ENCODE measurements at regions of chr6 and their contacts with region 1.

Region 1: DNA sequence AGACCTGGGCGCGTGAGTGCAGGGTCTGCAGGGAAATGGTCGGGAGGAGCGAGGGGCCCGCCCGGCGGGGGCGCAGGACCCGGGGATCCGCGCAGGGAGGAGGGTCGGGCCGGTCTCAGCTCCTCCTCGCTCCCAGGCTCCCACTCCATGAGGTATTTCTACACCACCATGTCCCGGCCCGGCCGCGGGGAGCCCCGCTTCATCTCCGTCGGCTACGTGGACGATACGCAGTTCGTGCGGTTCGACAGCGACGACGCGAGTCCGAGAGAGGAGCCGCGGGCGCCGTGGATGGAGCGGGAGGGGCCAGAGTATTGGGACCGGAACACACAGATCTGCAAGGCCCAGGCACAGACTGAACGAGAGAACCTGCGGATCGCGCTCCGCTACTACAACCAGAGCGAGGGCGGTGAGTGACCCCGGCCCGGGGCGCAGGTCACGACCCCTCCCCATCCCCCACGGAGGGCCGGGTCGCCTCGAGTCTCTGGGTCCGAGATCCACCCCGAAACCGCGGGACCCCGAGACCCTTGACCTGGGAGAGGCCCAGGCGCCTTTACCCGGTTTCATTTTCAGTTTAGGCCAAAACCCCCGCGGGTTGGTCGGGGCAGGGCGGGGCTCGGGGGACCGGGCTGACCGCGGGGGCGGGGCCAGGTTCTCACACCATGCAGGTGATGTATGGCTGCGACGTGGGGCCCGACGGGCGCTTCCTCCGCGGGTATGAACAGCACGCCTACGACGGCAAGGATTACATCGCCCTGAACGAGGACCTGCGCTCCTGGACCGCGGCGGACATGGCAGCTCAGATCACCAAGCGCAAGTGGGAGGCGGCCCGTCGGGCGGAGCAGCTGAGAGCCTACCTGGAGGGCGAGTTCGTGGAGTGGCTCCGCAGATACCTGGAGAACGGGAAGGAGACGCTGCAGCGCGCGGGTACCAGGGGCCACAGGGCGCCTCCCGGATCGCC is 54.2 kb upstream of the HLA-A start:
- DNase-seq: no peak
- ATAC-seq: peak; percentile 44; the same call in 2 of the 3 replicates
- H3K4me3 ChIP-seq: no peak overlapping the region
- H3K27ac ChIP-seq: no peak overlapping the region
- H3K4me1 ChIP-seq: peaks cover 0 to 15% of the 10 kb centered on the region in 2 experiments; a peak in 1 of 5 replicates
- H3K27me3 ChIP-seq: peaks cover 9 to 21% of the 10 kb centered on the region in 2 experiments; a peak in 3 of 5 replicates
- CTCF ChIP-seq: no peak
- EP300 ChIP-seq: no peak
- POLR2A ChIP-seq: no peak
- RAD21 ChIP-seq: no peak

Region 2: GRCh38 chr6:29676981-29677601 is 211.0 kb before region 1 on chr6:
- CTCF ChIA-PET with region 1: no interaction called
- POLR2A ChIA-PET with region 1: no interaction called
- in situ Hi-C with region 1: no loop called
- intact Hi-C with region 1: no loop called
- DNase-seq: no peak
- ATAC-seq: no peak
- H3K4me3 ChIP-seq: no peak overlapping the region
- H3K27ac ChIP-seq: no peak overlapping the region
- H3K4me1 ChIP-seq: peaks cover 0 to 9% of the 10 kb centered on the region in 2 experiments; a peak in 2 of 5 replicates
- H3K27me3 ChIP-seq: peaks cover 27 to 48% of the 10 kb centered on the region in 2 experiments; a peak in 4 of 5 replicates
- CTCF ChIP-seq: no peak
- EP300 ChIP-seq: no peak
- POLR2A ChIP-seq: no peak
- RAD21 ChIP-seq: no peak

Region 3: DNA sequence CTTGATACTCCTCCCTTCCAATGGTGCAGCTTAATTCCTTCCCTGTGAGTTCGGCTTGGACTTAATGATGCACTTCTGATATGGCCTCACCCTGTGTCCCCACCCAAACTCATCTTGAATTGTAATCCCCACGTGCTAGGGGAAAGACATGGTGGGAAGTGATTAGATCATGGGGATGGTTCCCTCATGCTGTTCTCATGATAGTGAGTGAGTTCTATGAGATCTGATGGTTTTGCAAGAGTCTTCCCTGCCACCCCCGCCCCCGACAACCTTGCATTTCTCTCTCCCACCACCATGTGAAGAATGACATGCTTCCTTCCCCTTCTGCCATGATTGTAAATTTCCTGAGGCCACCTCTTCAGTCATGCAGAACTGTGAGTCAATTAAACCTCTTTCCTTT is 110.8 kb before region 1 on chr6:
- CTCF ChIA-PET with region 1: no interaction called
- POLR2A ChIA-PET with region 1: no interaction called
- in situ Hi-C with region 1: no loop called
- intact Hi-C with region 1: no loop called
- DNase-seq: no peak
- ATAC-seq: no peak
- H3K4me3 ChIP-seq: no peak overlapping the region
- H3K27ac ChIP-seq: no peak overlapping the region
- H3K4me1 ChIP-seq: no peaks in the 10 kb centered on the region
- H3K27me3 ChIP-seq: peaks cover 4 to 8% of the 10 kb centered on the region in 2 experiments; a peak in 3 of 5 replicates
- CTCF ChIP-seq: no peak
- EP300 ChIP-seq: no peak
- POLR2A ChIP-seq: no peak
- RAD21 ChIP-seq: no peak

Region 4: DNA sequence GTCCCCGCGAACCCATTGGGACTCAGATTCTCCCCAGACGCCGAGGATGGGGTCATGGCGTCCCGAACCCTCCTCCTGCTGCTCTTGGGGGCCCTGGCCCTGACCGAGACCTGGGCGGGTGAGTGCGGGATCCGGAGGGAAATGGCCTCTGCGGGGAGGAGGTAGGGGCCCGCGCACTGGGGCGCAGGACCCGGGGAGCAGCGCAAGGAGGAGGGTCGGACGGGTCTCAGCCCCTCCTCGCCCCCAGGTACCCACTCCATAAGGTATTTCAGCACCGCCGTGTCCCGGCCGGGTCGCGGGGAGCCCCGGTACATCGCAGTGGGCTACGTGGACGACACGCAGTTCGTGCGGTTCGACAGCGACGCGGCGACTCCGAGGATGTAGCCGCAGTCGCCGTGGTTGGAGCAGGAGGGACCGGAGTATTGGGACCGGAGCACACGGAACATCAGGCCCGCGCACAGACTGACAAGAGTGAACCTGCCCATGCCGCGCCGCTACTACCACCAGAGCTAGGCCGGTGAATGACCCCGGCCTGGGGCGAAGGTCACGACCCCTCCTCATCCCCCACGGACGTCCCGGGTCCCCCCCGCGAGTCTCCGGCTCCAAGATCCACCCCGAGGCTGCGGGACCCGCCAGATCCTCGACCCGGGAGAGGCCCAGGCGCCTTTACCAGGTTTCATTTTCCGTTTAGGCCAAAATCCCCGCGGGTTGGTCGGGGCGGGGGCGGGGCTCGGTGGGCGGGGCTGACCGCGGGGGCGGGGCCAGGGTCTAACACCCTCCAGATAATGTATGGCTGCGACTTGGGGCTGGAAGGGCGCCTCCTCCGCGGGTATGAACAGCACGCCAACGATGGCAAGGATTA is 38.5 kb after region 1 on chr6:
- CTCF ChIA-PET with region 1: no interaction called
- POLR2A ChIA-PET with region 1: no interaction called
- in situ Hi-C with region 1: loop called (anchors 5 kb)
- intact Hi-C with region 1: no loop called
- DNase-seq: peak in 1 of 4 experiments; percentile 20
- ATAC-seq: peak; percentile 71
- H3K4me3 ChIP-seq: no peak overlapping the region
- H3K27ac ChIP-seq: no peak overlapping the region
- H3K4me1 ChIP-seq: peaks cover 0 to 10% of the 10 kb centered on the region in 2 experiments; a peak in 2 of 5 replicates
- H3K27me3 ChIP-seq: peaks cover 0 to 12% of the 10 kb centered on the region in 2 experiments; a peak in 3 of 5 replicates
- CTCF ChIP-seq: no peak
- EP300 ChIP-seq: no peak
- POLR2A ChIP-seq: no peak
- RAD21 ChIP-seq: no peak

Region 5: GRCh38 chr6:29942275-29943052 is 54.4 kb after region 1 on chr6 and contains the start of gene HLA-A:
- CTCF ChIA-PET with region 1: no interaction called
- POLR2A ChIA-PET with region 1: no interaction called
- in situ Hi-C with region 1: no loop called
- intact Hi-C with region 1: loop called (anchors 5 kb)
- DNase-seq: no peak
- ATAC-seq: peak; percentile 56
- H3K4me3 ChIP-seq: no peak within 1 kb of the TSS
- H3K27ac ChIP-seq: no peak within 1 kb of the TSS
- H3K4me1 ChIP-seq: peaks cover 0 to 7% of the 10 kb centered on the region in 2 experiments; a peak in 1 of 5 replicates
- H3K27me3 ChIP-seq: no peaks in the 10 kb centered on the region; a peak in 1 of 5 replicates
- CTCF ChIP-seq: no peak
- EP300 ChIP-seq: no peak
- POLR2A ChIP-seq: no peak
- RAD21 ChIP-seq: no peak
- polyA plus RNA-seq, gene HLA-A: not detected

Measured in K562 (cell line).